Heart right ventricle (tissue), 16 donors: ENCODE measurements at regions of chr20 and their contacts with region 1.

Region 1: DNA sequence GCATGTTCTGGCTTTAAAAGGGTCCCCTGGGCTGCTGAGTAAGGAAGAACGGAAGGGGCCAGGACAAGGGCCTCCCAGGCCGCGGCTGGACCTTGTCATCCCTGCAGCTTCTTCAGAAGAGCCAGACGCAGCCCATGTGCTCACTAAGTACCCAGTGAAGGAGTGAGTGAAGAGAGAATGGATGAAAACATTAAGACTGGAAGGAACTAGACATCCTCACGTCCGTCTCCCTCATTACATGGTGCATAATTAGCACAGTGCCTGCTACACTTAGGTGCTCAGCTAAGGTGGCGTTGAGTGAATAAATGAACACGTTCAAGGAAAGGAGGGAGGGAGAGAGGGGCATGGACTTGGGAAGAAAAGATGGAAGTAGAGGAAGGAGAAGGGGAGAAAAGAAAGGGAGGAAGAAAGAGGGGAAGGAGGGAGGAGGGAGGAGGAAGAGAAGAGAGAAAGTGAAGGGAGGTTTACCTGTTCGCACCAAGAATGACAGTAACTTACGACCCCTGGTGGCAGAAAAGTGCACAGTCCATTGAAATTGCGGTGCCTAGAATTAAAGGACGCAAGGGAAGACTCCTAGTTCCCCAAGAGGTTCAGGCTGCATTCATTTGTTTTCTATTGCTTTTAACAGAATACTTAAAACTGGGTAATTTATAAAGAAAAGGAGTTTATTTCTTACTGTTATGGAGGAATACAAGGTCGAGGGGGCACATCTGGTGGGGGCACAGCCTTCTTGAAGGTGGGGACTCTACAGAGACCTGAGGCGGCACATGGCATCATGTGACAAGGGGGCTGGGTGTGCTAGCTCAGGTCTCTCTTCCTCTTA is 8.0 kb downstream of the TP53RK start:
- DNase-seq: peak in 1 of 2 donors; percentile 40
- ATAC-seq: peak in 5 of 8 donors; percentile 23 to 54 (median 45)
- H3K4me3 ChIP-seq: no peak overlapping the region
- H3K27ac ChIP-seq: no peak overlapping the region
- H3K4me1 ChIP-seq: peaks cover 2 to 47% (median 22%) of the 10 kb centered on the region in 9 donors
- H3K27me3 ChIP-seq: no peaks in the 10 kb centered on the region
- CTCF ChIP-seq: peak; percentile 54 to 84 (median 79)

Region 2: DNA sequence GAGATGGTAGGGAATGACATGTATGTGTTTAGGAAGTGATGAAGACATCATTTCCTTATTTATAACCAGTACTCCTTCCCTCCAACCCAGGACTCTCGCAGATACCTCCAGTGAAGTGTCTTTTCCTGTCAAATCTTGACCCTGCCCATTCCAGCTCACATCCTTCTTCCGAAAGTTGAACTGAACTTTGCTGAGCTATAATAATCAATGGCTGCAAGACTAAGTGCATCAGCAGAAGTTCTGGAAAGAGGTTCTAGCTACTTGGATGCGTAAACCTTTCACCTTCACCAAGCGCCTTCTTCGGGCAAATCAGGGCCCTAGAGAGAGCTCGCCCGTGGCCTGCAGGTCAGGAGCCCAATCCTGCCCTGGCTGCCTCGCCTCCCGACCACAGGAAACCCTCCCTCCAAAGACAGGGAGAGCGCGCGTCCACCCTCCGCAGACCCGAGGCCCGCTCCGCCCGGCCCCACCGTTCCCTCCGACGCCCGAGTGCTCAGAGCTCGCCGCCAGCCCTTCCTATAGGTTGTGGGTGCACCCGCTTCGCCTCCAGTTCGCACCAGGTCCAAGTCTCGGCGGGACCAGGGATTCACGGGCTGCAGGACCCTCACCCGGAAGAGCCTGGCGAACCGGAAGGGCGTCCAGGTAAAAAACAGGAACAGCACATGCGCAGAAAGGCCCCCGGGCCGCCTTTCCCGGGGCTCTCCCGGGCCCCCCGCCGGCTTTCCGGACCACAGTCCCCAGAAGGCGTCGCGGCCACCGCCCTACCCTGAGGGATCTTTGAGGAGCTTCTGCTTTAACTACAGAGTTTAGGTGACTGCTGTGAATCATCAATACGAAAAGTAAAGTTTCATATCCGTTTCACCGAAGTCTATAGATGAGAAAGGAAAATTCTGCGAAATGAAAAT is 168.0 kb before region 1 on chr20 and contains the start of gene ZNF334:
- intact Hi-C with region 1: loop called in 1 of 10 experiments (anchors 2 kb)
- DNase-seq: peak; percentile 60 to 77
- ATAC-seq: peak; percentile 93 to 99 (median 97)
- H3K4me3 ChIP-seq: peak within 1 kb of the TSS; percentile 60 to 92 (median 74)
- H3K27ac ChIP-seq: peak within 1 kb of the TSS in 9 of 10 donors; percentile 8 to 91 (median 70)
- H3K4me1 ChIP-seq: peaks cover 0 to 13% (median 9%) of the 10 kb centered on the region in 9 donors
- H3K27me3 ChIP-seq: peaks cover 0 to 32% (median 15%) of the 10 kb centered on the region in 7 donors
- CTCF ChIP-seq: peak in 1 of 9 donors; percentile 11
- total RNA-seq, gene ZNF334: 0.70 to 3.0 (median 1.6) TPM

Region 3: GRCh38 chr20:46520976-46521579 is 160.2 kb before region 1 on chr20:
- intact Hi-C with region 1: loop called in 6 of 10 experiments (anchors 1 to 10 kb)
- DNase-seq: peak in 1 of 2 donors; percentile 4
- ATAC-seq: peak in 3 of 8 donors; percentile 55 to 68 (median 58)
- H3K4me3 ChIP-seq: no peak overlapping the region
- H3K27ac ChIP-seq: no peak overlapping the region
- H3K4me1 ChIP-seq: no peaks in the 10 kb centered on the region
- H3K27me3 ChIP-seq: peaks cover 0 to 32% (median 26%) of the 10 kb centered on the region in 7 donors
- CTCF ChIP-seq: peak in 8 of 9 donors; percentile 28 to 67 (median 58)

Region 4: DNA sequence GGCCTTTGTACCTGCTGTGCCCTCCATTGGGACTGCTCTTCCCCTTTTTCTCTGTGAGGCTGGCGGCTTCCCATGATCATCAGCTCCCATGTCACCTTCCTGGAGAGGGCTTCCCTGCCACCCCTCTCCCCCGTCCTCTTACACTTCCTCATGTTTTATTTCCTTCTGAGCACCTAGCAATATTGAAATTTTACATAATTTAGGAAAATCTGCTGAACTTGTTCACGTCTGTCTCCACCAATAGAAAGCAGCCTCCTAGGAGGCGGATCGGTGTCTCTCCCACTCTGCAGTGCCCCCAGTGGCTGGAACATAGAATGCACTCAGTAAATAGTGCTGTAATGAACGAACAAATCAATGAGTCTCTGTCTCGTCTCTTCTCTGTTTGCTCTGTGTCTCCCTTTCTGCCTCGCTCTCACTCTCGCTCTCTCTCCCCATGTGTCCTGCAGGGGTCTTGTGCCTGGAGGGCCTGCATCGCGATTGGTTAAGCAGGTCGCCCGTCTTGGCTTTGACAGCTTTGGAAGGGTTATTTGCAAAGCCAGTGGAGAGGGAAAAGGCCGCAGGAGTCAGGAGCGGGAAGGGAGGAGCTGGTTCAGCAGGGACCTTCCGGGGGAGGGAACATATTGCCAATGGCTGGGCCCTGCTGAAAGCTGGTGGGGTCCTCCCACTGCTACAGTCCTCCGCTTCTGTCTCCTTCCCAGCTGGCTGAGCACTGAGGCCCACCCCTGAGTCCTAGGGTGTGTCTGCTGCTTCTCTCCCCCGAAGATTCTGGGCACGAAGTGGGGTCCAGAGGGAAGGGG is 118.7 kb before region 1 on chr20:
- intact Hi-C with region 1: loop called in 9 of 10 experiments (anchors 2 to 10 kb)
- DNase-seq: peak; percentile 33 to 74
- ATAC-seq: peak; percentile 75 to 92 (median 86)
- H3K4me3 ChIP-seq: peak overlapping the region in 9 of 10 donors; percentile 25 to 50 (median 44)
- H3K27ac ChIP-seq: peak overlapping the region in 9 of 10 donors; percentile 30 to 83 (median 55)
- H3K4me1 ChIP-seq: peaks cover 0 to 20% (median 14%) of the 10 kb centered on the region in 9 donors
- H3K27me3 ChIP-seq: no peaks in the 10 kb centered on the region
- CTCF ChIP-seq: peak; percentile 79 to 96 (median 94)

Region 5: GRCh38 chr20:46568570-46569129 is 112.6 kb before region 1 on chr20:
- intact Hi-C with region 1: loop called in 7 of 10 experiments (anchors 2 to 10 kb)
- DNase-seq: peak; percentile 91 to 92
- ATAC-seq: peak; percentile 87 to 96 (median 92)
- H3K4me3 ChIP-seq: no peak overlapping the region
- H3K27ac ChIP-seq: peak overlapping the region in 7 of 10 donors; percentile 9 to 69 (median 46)
- H3K4me1 ChIP-seq: peaks cover 0 to 28% (median 13%) of the 10 kb centered on the region in 9 donors
- H3K27me3 ChIP-seq: no peaks in the 10 kb centered on the region
- CTCF ChIP-seq: no peak